ENCODE measurements at regions of chr9 and their contacts with region 1.

Region 1: DNA sequence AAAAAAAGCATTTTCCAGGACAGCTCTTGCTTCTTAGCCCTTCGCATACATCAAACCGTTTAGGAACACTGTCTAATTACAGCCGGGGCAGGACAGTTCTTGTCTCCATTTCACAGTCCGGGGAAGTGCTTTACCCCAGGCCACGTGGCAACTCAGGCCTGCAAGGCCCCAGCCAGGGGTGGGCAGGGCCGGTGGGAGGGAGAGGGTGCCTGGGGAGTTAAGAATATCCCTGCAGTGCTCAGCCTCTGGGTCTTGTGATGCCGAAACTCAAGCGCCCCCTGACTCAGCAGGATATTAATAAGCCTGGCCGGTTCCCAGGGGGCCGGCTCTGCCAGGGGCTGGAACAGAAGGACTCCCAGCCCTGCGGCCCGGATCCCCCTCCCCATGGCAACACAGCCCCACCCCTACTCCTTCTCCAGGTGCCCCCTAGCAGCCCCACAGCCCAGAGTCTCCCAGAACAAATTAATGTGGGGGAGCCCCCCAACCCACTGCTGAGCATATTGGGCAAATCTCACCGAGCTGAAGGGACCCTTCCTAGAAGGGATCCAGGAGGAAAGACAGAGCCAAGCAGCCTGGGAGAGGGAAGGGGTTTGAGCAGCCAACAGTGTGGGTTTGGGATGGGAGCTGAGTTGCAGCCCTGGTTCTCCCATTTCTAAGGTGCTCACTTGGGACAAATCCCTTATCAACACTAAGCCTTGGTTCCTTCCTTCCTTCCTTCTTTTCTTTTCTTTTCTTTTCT is 45.3 kb downstream of the PLPP7 start:
- DNase-seq: no peak
- H3K4me3 ChIP-seq: no peak overlapping the region
- H3K4me3 Mint-ChIP-seq: no peak overlapping the region
- H3K27ac ChIP-seq: no peak overlapping the region
- H3K27ac Mint-ChIP-seq: peak overlapping the region in 1 of 8 donors; percentile 57
- H3K4me1 ChIP-seq: no peaks in the 10 kb centered on the region
- H3K4me1 Mint-ChIP-seq: peaks cover 3 to 4% (median 4%) of the 10 kb centered on the region in 3 donors
- H3K27me3 ChIP-seq: no peaks in the 10 kb centered on the region
- H3K27me3 Mint-ChIP-seq: no peaks in the 10 kb centered on the region

Region 2: DNA sequence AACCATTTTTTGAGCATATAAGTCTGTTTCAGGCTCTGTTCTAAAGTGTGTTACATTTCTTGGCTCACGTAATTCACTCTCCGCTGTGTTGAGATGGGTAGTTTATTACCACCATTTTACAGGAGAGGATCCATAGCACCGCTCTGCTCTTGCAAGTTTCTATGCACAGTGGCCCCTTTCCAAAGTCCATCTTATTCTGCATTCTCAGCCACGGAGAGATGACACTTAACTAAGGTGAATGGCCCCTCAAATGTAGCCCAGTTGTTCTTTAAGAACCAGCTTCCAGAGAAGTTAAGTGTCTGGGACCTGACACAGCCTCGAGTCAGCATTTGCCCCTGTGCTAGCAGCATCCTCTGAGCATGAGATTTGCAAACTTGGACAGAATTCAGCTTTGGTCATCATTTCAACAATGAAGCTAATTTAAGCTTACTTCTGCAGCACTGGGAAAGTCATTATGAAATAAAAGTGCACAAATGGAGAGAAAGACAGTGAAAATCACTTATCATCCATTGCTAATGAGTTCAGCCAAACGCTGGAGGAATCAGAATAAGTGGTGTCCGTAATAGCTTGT is 120.4 kb before region 1 on chr9:
- CTCF ChIA-PET with region 1: interaction called, 16 read pairs
- POLR2A ChIA-PET with region 1: no interaction called
- DNase-seq: no peak
- H3K4me3 ChIP-seq: no peak overlapping the region
- H3K4me3 Mint-ChIP-seq: no peak overlapping the region
- H3K27ac ChIP-seq: no peak overlapping the region
- H3K27ac Mint-ChIP-seq: peak overlapping the region in 2 of 8 donors; percentile 38 to 47
- H3K4me1 ChIP-seq: no peaks in the 10 kb centered on the region
- H3K4me1 Mint-ChIP-seq: peaks cover 0 to 4% (median 4%) of the 10 kb centered on the region in 3 donors
- H3K27me3 ChIP-seq: no peaks in the 10 kb centered on the region
- H3K27me3 Mint-ChIP-seq: peaks cover 0 to 1% of the 10 kb centered on the region in 2 donors

Region 3: GRCh38 chr9:131270171-131271015 is 64.4 kb before region 1 on chr9:
- CTCF ChIA-PET with region 1: interaction called, 12 read pairs
- POLR2A ChIA-PET with region 1: no interaction called
- DNase-seq: peak in 4 of 5 donors; percentile 29 to 70 (median 57)
- H3K4me3 ChIP-seq: peak overlapping the region; percentile 70
- H3K4me3 Mint-ChIP-seq: peak overlapping the region; percentile 90 to 100 (median 96)
- H3K27ac ChIP-seq: peak overlapping the region; percentile 94
- H3K27ac Mint-ChIP-seq: peak overlapping the region; percentile 93 to 99 (median 97)
- H3K4me1 ChIP-seq: peaks cover 56% of the 10 kb centered on the region
- H3K4me1 Mint-ChIP-seq: peaks cover 55 to 73% (median 63%) of the 10 kb centered on the region in 3 donors
- H3K27me3 ChIP-seq: no peaks in the 10 kb centered on the region
- H3K27me3 Mint-ChIP-seq: peaks cover 0 to 3% of the 10 kb centered on the region in 2 donors

Region 4: DNA sequence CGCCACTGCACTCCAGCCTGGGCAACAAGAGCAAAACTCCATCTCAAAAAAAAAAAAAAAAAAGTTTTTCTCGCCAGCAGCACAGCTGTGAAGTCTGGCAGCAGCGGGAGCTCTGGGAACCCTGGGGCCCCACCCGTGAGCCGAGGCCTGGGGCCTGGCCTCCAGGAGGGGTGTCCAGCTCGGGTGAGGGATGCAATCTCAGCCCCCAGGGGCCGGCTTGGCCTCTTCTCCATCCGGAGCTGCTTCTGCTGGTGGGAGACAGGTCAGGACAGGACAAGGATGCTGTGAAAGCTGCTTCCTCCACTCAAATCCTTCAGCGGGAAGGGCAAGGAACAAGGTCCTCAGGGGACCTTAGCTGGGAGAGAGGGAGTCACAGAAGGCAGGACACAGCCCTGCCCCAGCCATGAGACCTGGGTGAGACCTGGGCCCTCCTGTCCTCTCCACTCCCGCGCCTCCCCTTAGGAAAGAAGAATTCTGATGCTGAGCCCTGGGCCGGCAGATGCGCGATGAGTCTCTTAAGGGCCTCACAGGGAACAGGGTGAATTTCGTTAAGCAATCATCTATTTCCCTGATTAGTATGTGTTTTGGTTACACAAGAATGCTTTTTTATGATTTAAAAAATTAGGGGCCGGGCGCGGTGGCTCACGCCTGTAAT is 14.6 kb before region 1 on chr9:
- CTCF ChIA-PET with region 1: interaction called, 19 read pairs
- POLR2A ChIA-PET with region 1: no interaction called
- DNase-seq: peak in 1 of 5 donors; percentile 14
- H3K4me3 ChIP-seq: no peak overlapping the region
- H3K4me3 Mint-ChIP-seq: no peak overlapping the region
- H3K27ac ChIP-seq: no peak overlapping the region
- H3K27ac Mint-ChIP-seq: no peak overlapping the region
- H3K4me1 ChIP-seq: no peaks in the 10 kb centered on the region
- H3K4me1 Mint-ChIP-seq: no peaks in the 10 kb centered on the region
- H3K27me3 ChIP-seq: no peaks in the 10 kb centered on the region
- H3K27me3 Mint-ChIP-seq: peaks cover 0 to 2% of the 10 kb centered on the region in 2 donors

Region 5: DNA sequence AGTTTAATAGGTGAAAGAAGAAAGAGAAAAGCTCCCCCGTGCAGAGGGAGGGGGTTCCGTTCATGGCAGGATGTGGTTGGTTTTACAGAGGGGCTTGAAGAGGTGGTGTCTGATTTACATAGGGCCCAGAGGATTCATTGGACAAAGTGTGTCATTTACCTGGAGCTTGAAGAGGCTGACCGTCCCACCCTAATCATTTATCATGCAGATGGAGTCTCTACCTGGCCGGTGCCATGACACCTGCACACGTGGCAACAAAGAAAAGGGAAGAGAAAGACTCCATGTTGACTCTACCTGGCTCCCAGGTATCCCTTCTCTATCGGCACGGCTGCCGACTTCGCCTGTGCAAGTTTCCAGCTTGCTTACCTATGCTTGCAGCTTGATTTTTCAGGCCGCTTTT is 23.8 kb after region 1 on chr9:
- CTCF ChIA-PET with region 1: no interaction called
- POLR2A ChIA-PET with region 1: no interaction called
- DNase-seq: peak in 1 of 5 donors; percentile 73
- H3K4me3 ChIP-seq: peak overlapping the region; percentile 9
- H3K4me3 Mint-ChIP-seq: peak overlapping the region in 5 of 7 donors; percentile 60 to 73 (median 67)
- H3K27ac ChIP-seq: no peak overlapping the region
- H3K27ac Mint-ChIP-seq: peak overlapping the region in 5 of 8 donors; percentile 31 to 84 (median 42)
- H3K4me1 ChIP-seq: peaks cover 18% of the 10 kb centered on the region
- H3K4me1 Mint-ChIP-seq: peaks cover 10 to 23% (median 20%) of the 10 kb centered on the region in 3 donors
- H3K27me3 ChIP-seq: no peaks in the 10 kb centered on the region
- H3K27me3 Mint-ChIP-seq: peaks cover 0 to 2% of the 10 kb centered on the region in 2 donors

Measured in CD8-positive, alpha-beta memory T cell (primary cell).